Posterior vena cava (tissue), 2 donors: ENCODE measurements at regions of chr12 and their contacts with region 1.

Region 1: DNA sequence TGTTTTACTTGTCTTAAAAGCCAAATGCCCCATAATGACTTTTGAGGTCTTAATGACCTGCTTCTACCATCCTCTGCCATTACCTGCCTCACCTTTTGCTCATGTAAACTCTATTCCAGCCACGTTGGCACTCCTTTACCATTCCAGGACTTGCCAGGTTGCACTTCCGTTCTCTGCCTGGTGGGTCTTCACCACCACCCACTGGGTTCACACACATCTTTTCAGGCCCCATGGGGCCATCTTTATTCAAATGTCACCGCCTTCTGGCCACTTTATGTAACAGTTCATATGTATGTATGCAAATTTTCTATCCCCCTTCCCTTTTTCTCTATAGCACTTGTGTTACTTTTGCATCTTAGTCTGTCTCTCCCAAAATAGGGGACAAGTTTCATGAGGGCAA is 57.7 kb downstream of the ATP2A2 start:
- DNase-seq: no peak

Region 2: GRCh38 chr12:108930155-108930554 is 1408.6 kb before region 1 on chr12:
- intact Hi-C with region 1: no loop called
- DNase-seq: peak; percentile 3

Region 3: DNA sequence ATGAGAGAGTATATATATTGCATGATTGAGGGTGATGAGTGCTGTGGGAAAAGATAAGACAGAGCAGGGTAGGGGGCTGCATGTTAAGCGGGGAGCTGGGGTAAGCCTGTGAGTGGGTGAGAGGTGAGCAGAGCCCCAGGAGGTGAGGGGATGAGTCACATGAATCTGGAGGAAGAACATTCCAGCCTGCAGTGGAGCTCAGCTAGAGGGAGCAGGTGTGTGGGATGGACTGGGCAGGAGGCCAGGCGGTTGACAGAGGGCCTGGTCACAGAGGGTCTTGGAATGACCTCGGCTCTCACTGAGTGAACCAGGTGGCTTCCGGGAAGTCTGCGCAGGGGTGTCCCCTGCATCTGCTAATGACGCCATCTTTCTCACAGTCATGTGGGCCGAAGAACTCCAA is 387.0 kb before region 1 on chr12:
- intact Hi-C with region 1: no loop called
- DNase-seq: no peak

Region 4: DNA sequence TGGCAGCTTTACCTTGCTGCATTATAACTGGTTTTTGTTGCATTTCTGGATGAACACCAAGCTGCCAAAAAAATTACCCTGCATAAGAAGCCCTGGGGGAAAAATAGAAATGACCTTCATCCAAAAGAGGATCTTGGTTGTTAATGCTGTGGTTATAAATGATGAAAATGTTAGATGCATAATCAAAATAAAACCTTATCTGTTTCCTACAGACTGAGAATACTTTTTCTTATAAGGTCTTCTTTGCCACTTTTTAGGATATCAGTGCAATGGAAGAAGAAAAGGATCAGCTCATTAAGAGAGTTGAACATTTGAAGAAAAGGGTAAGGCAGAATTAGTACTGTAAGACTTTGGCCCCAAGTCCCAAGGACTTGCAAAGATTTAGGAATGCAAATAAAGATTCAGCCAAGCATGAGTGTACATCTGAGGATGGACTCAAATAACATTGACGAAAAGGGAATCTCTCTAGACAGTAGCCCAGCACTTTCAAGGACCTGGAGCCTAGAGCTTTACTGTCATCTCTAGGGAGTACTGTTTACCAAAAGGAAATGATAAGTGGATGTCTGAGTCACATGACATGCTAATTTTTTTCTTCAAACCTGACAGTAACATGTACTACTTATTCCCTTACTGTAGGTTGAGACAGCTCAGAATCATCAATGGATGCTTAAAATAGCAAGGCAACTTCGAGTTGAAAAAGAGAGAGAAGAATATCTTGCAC is 203.9 kb before region 1 on chr12:
- intact Hi-C with region 1: loop called in 1 of 2 experiments (anchors 10 kb)
- DNase-seq: no peak

Region 5: GRCh38 chr12:110312581-110313360 is 26.0 kb before region 1 on chr12:
- intact Hi-C with region 1: loop called in 1 of 2 experiments (anchors 1 kb)
- DNase-seq: no peak